ENCODE measurements at regions of chr2 and their contacts with region 1.

Region 1: GRCh38 chr2:85813982-85814801 is 60.4 kb downstream of the ATOH8 start:
- DNase-seq: peak; percentile 65 to 86 (median 74)
- ATAC-seq: peak; percentile 80
- H3K4me3 ChIP-seq: no peak overlapping the region
- H3K4me3 Mint-ChIP-seq: no peak overlapping the region
- H3K27ac ChIP-seq: no peak overlapping the region
- H3K27ac Mint-ChIP-seq: no peak overlapping the region
- H3K4me1 ChIP-seq: peaks cover 4% of the 10 kb centered on the region
- H3K4me1 Mint-ChIP-seq: no peaks in the 10 kb centered on the region
- H3K27me3 ChIP-seq: no peaks in the 10 kb centered on the region
- H3K27me3 Mint-ChIP-seq: peaks cover 22% of the 10 kb centered on the region
- CTCF ChIP-seq: peak; percentile 77

Region 2: DNA sequence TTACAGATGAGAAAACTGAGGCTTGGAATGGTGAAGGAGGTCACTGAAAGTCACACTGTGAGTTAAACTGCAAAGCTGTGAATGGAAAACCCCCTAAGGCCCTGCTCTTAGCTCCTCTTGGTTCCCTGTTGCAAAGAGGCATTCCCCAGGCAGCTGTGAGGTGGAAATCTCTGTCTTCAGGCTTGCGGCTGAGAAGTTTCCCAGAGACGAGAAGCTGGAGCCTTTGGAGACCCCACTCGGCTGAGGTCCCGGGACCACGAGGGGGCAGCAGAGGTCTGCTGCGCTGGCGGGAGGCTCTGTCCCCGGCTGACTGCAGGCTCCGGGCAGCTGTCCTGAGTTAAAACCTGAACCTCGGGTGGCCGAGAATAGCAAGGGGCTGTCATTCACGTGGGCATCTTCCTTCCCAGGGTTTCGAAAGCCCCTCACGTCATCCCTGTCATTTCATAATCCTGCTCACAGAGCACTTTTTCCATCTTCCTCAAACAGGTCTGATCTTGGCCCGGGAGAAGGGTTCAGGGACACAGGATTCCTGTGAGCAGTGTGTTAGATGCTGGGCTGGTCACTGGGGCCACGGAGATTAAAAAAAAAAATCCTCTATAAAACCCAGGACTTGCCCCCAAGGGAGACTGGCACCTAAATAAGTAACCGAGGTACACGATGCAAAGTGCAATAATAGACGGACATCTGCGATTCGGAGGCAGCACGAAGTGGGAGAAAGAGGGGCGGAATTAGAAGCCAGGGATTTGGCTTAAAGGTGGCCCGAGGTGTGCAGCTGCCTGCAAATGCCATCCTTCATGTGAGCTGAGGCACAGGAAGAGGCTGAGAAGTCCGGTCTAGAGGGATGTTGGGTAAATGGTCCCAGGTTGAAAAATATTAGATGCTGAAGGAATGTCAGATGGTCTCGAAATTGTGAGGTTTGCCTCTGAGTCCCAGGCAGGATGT is 85.0 kb before region 1 on chr2:
- CTCF ChIA-PET with region 1: interaction called, 7 read pairs
- POLR2A ChIA-PET with region 1: no interaction called
- intact Hi-C with region 1: loop called (anchors 1 kb)
- DNase-seq: peak; percentile 44 to 80 (median 64)
- ATAC-seq: peak; percentile 71
- H3K4me3 ChIP-seq: no peak overlapping the region
- H3K4me3 Mint-ChIP-seq: no peak overlapping the region
- H3K27ac ChIP-seq: no peak overlapping the region
- H3K27ac Mint-ChIP-seq: no peak overlapping the region
- H3K4me1 ChIP-seq: peaks cover 7% of the 10 kb centered on the region
- H3K4me1 Mint-ChIP-seq: no peaks in the 10 kb centered on the region
- H3K27me3 ChIP-seq: peaks cover 3 to 5% of the 10 kb centered on the region in 2 experiments
- H3K27me3 Mint-ChIP-seq: peaks cover 8% of the 10 kb centered on the region
- CTCF ChIP-seq: peak; percentile 83

Region 3: DNA sequence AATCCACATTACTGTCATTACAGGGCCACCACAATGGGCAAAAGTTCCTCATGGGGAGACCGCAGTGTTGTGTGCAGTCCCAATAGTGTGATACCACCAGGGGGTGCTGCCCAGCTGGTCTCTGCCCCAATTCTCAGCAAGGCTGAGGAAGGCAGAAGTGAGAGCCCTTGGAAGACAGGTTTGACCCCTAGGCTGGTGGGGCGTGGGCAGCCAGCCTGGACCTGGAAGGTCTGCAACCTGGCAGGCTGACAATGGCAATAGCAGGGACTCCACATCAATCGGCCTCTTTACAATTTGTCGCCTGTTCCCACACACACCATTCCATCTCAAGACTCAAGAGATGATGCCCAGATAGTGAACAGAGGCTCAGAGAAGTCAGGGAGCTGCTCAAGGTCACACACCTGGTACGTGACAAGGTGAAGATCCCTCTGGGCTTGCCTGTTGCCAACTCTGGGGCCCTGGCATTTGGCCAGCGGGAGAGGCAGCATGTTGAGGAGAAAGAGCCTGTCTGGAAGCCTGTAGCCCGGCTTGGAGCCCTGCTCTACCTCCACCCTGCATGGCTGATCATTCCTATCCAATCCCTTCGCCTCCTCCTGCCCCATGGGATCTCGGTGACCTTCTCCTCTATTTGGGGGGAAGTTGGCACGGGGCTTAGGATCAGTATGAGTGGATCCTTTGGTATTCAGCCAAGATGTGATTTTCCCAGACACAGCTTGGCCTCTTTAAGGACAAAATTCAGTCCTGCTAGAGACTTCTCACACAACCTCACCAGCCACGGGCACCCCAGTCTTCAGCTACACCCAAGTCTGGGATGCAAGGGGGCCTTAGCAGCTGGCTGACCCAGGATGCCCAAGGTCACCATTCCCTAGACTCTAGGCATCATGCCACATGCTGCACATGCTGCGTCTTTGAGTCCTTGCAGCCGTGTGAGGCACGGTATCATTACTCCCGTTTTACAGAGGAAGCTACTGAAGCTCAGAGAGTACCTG is 63.3 kb before region 1 on chr2:
- CTCF ChIA-PET with region 1: interaction called, 4 read pairs
- POLR2A ChIA-PET with region 1: no interaction called
- intact Hi-C with region 1: loop called (anchors 1 kb)
- DNase-seq: peak; percentile 16 to 73 (median 32)
- ATAC-seq: peak; percentile 57
- H3K4me3 ChIP-seq: no peak overlapping the region
- H3K4me3 Mint-ChIP-seq: no peak overlapping the region
- H3K27ac ChIP-seq: no peak overlapping the region
- H3K27ac Mint-ChIP-seq: no peak overlapping the region
- H3K4me1 ChIP-seq: peaks cover 24% of the 10 kb centered on the region
- H3K4me1 Mint-ChIP-seq: peaks cover 20% of the 10 kb centered on the region
- H3K27me3 ChIP-seq: peaks cover 41 to 59% of the 10 kb centered on the region in 2 experiments
- H3K27me3 Mint-ChIP-seq: peaks cover 75% of the 10 kb centered on the region
- CTCF ChIP-seq: peak; percentile 39